Breast epithelium (tissue), 4 donors: ENCODE measurements at regions of chr18 and their contacts with region 1.

Region 1: DNA sequence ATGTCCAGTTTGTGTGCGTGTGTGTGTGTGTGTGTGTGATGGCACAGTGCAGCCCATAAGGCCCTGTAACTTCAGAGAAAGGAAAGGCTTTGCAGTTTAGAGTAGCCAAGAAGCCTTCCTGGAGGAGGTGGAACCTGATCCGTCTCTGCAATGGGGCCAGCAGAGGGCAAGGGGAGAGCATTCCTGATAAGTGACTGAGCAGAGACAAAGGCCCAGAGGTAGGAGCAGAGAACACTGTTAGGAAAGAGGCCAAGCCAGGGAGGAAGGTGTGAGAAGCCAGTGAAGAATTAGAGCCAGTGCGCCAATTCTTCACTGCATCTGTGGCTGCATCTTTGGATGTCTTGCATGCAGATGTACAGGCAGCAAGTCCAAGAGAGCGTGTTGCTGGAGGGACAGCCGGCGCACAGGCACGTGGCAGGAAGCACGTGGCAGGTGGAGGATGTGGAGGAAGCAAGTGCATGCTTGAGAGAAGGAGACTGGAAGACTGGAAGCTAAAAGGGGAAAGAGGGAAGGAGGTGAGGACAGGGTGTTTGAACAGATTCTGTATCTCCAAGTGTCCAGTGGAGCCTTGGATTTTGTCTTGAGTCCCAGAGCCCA is 196.3 kb downstream of the CTIF start:
- DNase-seq: no peak
- H3K4me3 ChIP-seq: no peak overlapping the region
- H3K27ac ChIP-seq: no peak overlapping the region
- H3K4me1 ChIP-seq: peaks cover 0 to 6% of the 10 kb centered on the region in 2 donors
- H3K27me3 ChIP-seq: no peaks in the 10 kb centered on the region
- CTCF ChIP-seq: no peak
- POLR2A ChIP-seq: no peak

Region 2: DNA sequence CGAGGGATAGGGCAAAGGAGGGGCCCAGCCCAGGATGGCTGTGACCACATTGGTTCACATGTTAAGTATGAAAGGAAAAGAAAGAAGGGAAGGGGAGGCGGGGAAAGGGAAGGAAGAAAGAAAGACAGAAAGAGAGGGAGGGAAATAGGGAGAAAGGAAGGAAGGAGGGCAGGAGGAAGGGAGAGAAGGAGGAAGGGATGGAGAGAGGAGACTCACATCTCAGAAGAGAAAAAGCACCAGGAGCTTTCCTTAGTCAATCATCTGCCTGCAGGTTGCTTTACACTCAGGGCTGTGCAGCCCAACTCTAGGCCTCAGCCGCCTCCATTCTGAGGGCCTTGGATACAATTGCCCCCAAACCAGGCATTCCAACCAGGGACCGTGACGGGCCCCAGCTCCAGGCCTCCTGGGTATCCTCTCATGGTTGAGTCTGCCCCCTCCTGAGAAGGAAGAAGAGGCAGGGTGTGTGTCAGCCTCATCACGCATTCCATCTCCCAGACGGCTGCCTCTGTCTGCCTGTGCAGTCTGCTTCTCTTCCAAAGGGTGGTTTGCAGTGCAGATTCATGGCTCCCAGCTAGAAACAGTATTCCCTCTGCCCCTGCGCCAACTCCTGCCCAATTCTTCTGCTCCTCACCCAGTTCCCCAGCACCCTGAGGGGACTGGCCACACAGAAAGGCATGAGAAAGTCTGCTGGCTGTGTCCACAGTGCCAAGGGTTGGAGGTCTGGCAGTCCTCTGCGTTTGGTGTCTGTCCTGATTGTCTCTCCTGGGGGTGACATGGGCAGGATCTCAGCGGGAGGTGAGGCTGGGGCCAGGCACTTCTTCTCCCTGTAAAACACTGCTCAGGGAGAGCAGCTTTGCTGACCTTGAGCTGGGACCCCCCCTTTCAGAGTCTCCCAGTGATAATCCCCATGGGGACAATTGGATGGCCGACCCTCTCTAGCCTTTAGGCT is 52.3 kb after region 1 on chr18:
- intact Hi-C with region 1: loop called (anchors 1 kb)
- DNase-seq: peak in 1 of 2 donors; percentile 27
- H3K4me3 ChIP-seq: no peak overlapping the region
- H3K27ac ChIP-seq: no peak overlapping the region
- H3K4me1 ChIP-seq: peaks cover under 1 to 6% of the 10 kb centered on the region in 2 donors
- H3K27me3 ChIP-seq: no peaks in the 10 kb centered on the region
- CTCF ChIP-seq: no peak
- POLR2A ChIP-seq: no peak